Activated CD4-positive, alpha-beta T cell treated with anti-CD3 and anti-CD28 coated beads for 36 hours (primary cell): ENCODE measurements at regions of chr1 and their contacts with region 1.

Region 1: DNA sequence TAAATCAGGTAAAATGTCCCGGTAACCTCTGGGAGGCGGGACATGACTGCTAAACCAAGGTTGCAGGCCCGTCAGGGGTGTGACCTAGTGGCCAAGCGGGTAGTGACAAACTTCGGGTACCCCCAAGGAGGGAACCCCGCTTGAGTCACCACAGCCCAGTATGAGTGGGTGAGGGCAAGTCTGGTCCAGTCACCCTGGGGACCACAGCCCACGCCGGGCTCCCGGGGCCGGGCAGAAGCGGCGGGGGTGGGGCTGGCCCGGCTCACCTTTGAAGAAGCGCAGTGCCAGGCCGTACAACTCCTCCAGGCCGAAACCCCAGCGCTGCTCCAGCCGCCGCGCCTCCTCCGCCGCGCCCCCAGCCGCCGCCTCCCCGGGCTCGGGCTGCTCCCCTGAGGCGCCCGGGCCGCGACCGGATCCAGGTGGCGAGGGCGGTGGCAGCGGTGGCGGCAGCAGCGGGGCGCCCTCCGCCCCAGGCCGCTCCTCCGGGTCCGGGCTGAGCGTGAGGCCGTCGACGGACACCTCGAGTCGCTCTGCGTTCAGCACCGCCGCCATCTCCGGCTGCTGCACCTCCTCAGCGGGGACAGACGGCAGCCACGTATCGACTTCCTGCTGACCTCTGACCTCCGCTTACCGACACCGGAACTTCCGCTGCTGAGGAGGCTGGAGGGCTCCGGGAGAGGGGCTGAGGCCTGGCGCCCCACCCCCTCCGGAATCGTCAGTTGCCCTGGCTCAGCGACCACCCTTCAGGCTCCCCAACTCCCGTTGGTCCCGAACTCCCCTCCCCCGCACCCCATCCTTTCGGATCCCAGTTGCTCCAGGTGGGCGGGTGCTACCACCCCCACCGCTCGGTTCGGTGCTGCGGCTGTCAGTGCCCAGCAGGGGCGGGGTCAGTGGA is at the start of gene ACBD3:
- DNase-seq: peak; percentile 91
- ATAC-seq: peak; percentile 97
- H3K4me3 Mint-ChIP-seq: peak within 1 kb of the TSS; percentile 91
- H3K27ac Mint-ChIP-seq: peak within 1 kb of the TSS; percentile 92
- H3K4me1 Mint-ChIP-seq: peaks cover 36% of the 10 kb centered on the region
- H3K27me3 Mint-ChIP-seq: no peaks in the 10 kb centered on the region
- total RNA-seq, gene ACBD3: 17.0 to 20.2 TPM

Region 2: DNA sequence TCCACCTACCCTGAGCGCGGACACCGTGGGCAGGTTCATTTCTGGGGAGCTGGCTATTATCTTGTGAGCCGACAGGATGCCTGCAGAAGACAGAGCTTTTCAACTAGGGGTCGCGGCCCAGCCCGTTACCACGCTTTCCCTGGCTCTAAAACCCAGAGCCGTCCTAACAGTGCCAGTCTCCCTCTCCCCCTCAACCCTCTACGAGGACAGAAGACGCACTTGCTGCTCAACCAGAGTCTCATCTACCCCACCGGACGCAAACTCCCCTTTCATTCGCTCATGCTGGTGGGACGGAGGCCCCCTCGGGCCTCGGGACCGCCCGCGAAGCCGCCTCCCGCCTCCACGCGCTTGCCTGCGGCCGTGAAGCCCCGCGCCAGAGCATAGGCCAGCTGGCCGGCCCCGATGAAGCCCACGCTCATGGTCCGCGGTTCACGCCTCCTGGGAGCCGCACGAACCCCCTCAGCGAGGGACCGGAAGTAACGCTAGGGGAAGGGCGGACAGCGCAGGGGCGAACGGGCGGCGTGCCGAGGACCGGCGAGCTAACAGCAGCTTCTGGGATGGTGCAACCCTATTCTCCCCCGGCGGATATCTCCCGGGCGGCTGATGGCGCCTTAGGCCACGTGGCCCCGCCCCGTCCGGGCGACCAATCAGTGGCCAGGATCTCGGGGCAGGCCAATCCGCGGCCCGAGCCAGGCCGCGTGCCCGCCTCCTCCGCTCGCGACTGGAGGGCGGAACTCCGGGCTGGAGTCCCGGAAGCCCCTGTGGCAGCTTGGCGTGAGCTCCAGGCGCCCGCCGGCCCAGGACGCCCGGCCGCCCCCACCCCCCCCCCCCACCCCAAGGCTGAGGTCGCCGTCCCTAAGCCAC is 262.4 kb before region 1 on chr1 and contains the start of gene PYCR2:
- CTCF ChIA-PET with region 1: no interaction called
- POLR2A ChIA-PET with region 1: no interaction called
- intact Hi-C with region 1: loop called in 1 of 2 experiments (anchors 5 kb)
- DNase-seq: peak; percentile 97
- ATAC-seq: peak; percentile 97
- H3K4me3 Mint-ChIP-seq: peak within 1 kb of the TSS; percentile 93
- H3K27ac Mint-ChIP-seq: peak within 1 kb of the TSS; percentile 96
- H3K4me1 Mint-ChIP-seq: peaks cover 54% of the 10 kb centered on the region
- H3K27me3 Mint-ChIP-seq: no peaks in the 10 kb centered on the region
- total RNA-seq, gene PYCR2: 106 to 126 TPM

Region 3: GRCh38 chr1:226308723-226309315 is 122.4 kb after region 1 on chr1 and contains the start of gene LIN9:
- CTCF ChIA-PET with region 1: interaction called, 3 read pairs
- POLR2A ChIA-PET with region 1: no interaction called
- intact Hi-C with region 1: loop called in 1 of 2 experiments (anchors 1 kb)
- DNase-seq: peak; percentile 97
- ATAC-seq: peak; percentile 87
- H3K4me3 Mint-ChIP-seq: peak within 1 kb of the TSS; percentile 83
- H3K27ac Mint-ChIP-seq: peak within 1 kb of the TSS; percentile 86
- H3K4me1 Mint-ChIP-seq: peaks cover 15% of the 10 kb centered on the region
- H3K27me3 Mint-ChIP-seq: peaks cover 10% of the 10 kb centered on the region
- total RNA-seq, gene LIN9: 10.6 TPM

Region 4: DNA sequence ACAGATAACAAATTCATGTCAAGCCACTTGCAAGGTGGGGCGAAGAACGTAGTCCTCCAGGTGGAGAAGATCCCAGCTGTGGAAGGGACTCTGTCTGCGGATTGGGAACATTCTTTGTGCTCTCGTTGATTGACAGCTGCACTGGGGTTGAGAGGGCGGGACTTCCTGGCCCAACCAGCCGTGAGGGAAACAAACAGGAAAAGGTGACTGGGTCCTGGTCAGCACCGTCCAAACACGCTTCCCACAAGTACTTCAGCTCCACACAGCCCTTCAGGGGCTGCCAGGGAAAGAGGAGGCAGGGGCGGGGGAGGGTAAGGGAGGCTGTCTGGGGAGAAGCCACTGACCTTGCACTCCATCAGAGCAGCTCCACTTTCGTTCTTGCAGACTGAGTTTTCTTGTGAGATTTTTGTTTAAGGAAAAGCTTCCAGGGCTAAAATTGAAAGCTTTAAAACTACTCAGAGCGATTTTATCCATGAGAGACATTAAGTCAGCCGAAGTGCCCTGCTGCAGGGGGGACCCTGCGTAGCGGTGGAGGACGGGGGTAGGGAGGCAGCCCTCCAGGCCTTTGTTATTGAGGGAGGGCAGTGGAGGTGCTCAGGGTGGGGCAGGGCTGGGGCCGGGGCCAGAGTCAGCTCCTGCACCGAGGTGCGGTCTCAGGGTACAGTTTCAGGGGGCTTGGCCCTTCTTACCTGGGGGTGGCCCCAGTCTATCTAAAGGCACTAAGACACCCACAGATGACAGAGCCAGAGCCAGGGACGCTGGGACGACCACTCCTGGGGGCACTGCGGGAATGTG is 340.6 kb after region 1 on chr1:
- CTCF ChIA-PET with region 1: no interaction called
- POLR2A ChIA-PET with region 1: no interaction called
- intact Hi-C with region 1: no loop called
- DNase-seq: no peak
- ATAC-seq: no peak
- H3K4me3 Mint-ChIP-seq: no peak overlapping the region
- H3K27ac Mint-ChIP-seq: no peak overlapping the region
- H3K4me1 Mint-ChIP-seq: no peaks in the 10 kb centered on the region
- H3K27me3 Mint-ChIP-seq: peaks cover 4% of the 10 kb centered on the region